Activated CD4-positive, alpha-beta memory T cell treated with anti-CD3 and anti-CD28 coated beads for 36 hours (primary cell): ENCODE measurements at regions of chr10 and their contacts with region 1.

Region 1: GRCh38 chr10:86046845-86047460 is 319.6 kb downstream of the GRID1 start:
- DNase-seq: peak; percentile 54
- H3K4me3 Mint-ChIP-seq: no peak overlapping the region
- H3K27ac Mint-ChIP-seq: no peak overlapping the region
- H3K4me1 Mint-ChIP-seq: peaks cover 28% of the 10 kb centered on the region
- H3K27me3 Mint-ChIP-seq: peaks cover 22% of the 10 kb centered on the region

Region 2: DNA sequence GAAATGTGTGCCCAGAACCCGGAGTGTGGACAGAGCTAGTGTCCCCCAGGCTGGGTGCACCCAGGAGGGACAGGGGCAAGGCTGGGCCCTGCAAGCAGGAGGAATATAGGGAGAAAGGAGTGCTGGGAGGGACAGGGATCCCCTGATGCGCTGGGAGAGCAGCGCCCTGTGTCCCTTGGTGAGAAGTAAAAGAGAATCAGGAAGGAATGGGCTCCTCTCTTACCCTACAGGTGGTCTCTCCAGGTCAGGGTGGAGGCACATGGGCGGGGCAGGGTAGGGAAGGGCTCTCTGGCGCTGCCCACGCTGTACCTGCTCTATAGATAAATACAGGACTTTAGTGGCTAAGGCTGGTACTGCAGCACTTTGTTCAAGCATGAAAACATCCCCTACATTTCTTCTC is 434.1 kb before region 1 on chr10:
- CTCF ChIA-PET with region 1: no interaction called
- POLR2A ChIA-PET with region 1: no interaction called
- intact Hi-C with region 1: loop called (anchors 1 kb)
- DNase-seq: peak; percentile 15
- H3K4me3 Mint-ChIP-seq: no peak overlapping the region
- H3K27ac Mint-ChIP-seq: peak overlapping the region; percentile 38
- H3K4me1 Mint-ChIP-seq: peaks cover 38% of the 10 kb centered on the region
- H3K27me3 Mint-ChIP-seq: no peaks in the 10 kb centered on the region

Region 3: DNA sequence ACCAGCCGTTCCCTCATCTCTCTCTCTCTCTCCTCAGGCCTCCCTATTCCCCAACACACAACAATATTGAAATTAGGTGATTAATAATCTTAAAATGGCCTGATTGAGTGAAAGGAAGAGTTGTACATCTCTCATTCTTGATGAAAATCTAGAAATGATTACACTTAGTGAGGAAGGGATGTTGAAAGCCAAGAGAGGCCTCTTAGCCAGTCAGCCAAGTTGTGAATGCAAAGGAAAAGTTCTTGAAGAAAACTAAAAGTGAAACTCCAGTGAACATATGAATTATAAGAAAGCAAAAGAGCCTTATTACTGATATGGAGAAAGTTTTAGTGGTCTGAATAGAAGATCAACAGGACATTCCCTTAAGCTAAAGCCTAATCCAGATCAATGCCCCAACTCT is 375.4 kb before region 1 on chr10:
- CTCF ChIA-PET with region 1: no interaction called
- POLR2A ChIA-PET with region 1: no interaction called
- intact Hi-C with region 1: loop called (anchors 1 kb)
- DNase-seq: no peak
- H3K4me3 Mint-ChIP-seq: no peak overlapping the region
- H3K27ac Mint-ChIP-seq: no peak overlapping the region
- H3K4me1 Mint-ChIP-seq: peaks cover 8% of the 10 kb centered on the region
- H3K27me3 Mint-ChIP-seq: no peaks in the 10 kb centered on the region

Region 4: GRCh38 chr10:85702768-85703167 is 344.2 kb before region 1 on chr10:
- CTCF ChIA-PET with region 1: no interaction called
- POLR2A ChIA-PET with region 1: no interaction called
- intact Hi-C with region 1: no loop called
- DNase-seq: no peak
- H3K4me3 Mint-ChIP-seq: no peak overlapping the region
- H3K27ac Mint-ChIP-seq: no peak overlapping the region
- H3K4me1 Mint-ChIP-seq: no peaks in the 10 kb centered on the region
- H3K27me3 Mint-ChIP-seq: peaks cover 26% of the 10 kb centered on the region

Region 5: DNA sequence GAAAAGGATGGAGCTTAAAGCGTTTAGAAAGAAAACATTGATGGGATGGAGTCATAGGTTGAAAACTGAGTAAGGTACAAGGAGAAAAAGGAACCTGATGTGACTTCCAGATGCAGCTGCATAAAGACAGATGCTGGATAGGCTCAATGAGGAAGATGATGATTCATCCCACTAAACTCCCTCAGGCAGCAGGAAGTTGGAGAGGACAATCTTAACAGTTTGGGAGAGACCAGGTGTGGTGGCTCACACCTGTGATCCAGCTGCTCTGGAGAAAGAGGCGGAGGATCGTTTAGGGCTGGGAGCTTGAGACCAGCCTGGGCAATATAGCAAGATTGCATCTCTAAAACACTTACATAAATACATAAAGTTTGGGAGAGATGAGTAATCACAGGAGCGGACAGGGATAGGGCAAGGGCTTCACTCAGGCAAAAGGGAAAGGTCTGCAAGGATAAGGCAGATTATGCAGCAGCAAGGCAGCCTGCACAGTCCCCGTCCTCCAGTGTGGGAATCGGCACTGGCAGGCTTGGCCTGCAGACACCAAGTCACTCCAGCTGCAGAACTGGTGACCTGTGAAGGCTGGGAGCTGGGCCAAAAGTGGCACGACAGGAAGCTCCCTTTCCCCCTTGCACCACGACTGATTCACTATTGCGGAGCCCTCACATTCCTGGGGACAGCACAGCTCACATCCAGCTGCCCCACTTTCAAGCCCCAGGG is 118.8 kb before region 1 on chr10:
- CTCF ChIA-PET with region 1: no interaction called
- POLR2A ChIA-PET with region 1: no interaction called
- intact Hi-C with region 1: no loop called
- DNase-seq: no peak
- H3K4me3 Mint-ChIP-seq: no peak overlapping the region
- H3K27ac Mint-ChIP-seq: no peak overlapping the region
- H3K4me1 Mint-ChIP-seq: no peaks in the 10 kb centered on the region
- H3K27me3 Mint-ChIP-seq: no peaks in the 10 kb centered on the region